ENCODE measurements at regions of chr7 and their contacts with region 1.

Region 1: GRCh38 chr7:134613623-134614347 is 32.9 kb upstream of the BPGM start:
- DNase-seq: peak; percentile 99
- H3K4me3 ChIP-seq: no peak overlapping the region
- H3K27ac ChIP-seq: peak overlapping the region; percentile 84
- H3K4me1 ChIP-seq: peaks cover 33% of the 10 kb centered on the region
- H3K27me3 ChIP-seq: no peaks in the 10 kb centered on the region
- CTCF ChIP-seq: peak in 1 of 2 donors; percentile 24

Region 2: GRCh38 chr7:134432296-134433152 is 181.3 kb before region 1 on chr7:
- CTCF ChIA-PET with region 1: no interaction called
- dilution Hi-C with region 1: loop called (anchors 25 kb)
- in situ Hi-C with region 1: loop called in 1 of 2 experiments (anchors 10 kb)
- intact Hi-C with region 1: no loop called
- DNase-seq: peak; percentile 91
- H3K4me3 ChIP-seq: peak overlapping the region; percentile 35 to 45 (median 45)
- H3K27ac ChIP-seq: peak overlapping the region; percentile 68
- H3K4me1 ChIP-seq: peaks cover 22% of the 10 kb centered on the region
- H3K27me3 ChIP-seq: no peaks in the 10 kb centered on the region
- CTCF ChIP-seq: peak; percentile 54 to 62

Region 3: DNA sequence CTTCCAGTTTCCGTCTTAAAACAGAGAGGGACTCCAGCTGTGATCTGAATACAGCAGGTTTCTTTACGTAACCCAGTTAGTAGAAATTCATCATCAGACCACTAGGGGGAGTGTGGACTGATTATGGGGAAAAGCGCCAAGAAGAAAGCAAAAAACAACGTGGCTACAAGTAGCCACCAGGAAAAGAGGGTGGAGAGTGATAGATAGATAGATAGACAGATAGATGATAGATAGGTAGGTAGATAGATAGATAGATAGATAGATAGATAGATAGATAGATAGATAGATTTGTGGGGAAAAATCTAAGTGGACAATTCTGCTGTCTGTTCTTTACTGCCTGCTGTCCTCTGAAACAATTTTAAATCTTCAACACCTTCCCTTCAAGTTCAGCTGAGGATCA is 99.1 kb before region 1 on chr7:
- CTCF ChIA-PET with region 1: no interaction called
- dilution Hi-C with region 1: no loop called
- in situ Hi-C with region 1: loop called in 1 of 2 experiments (anchors 5 kb)
- intact Hi-C with region 1: no loop called
- DNase-seq: peak; percentile 75
- H3K4me3 ChIP-seq: no peak overlapping the region
- H3K27ac ChIP-seq: no peak overlapping the region
- H3K4me1 ChIP-seq: peaks cover 52% of the 10 kb centered on the region
- H3K27me3 ChIP-seq: no peaks in the 10 kb centered on the region
- CTCF ChIP-seq: peak; percentile 73 to 78

Region 4: DNA sequence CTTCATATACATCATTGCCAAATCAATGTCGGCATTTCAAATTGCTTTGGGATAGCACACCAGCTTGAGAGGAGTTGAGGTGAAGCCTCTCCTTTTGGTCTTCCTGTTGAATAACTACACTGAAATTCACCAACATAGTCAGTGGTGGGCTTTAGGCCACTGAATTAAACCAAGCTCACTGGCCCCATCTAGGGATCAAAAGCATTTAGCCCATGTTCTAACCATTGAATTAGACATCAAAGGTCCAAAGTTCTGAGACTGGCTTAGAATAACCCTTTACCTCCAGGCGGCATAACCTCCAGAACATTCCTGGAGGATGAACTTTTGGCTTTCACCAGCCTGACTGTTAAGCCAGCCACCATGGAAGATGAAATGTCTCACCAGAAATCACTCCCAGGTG is 87.5 kb after region 1 on chr7:
- CTCF ChIA-PET with region 1: no interaction called
- dilution Hi-C with region 1: no loop called
- in situ Hi-C with region 1: no loop called
- intact Hi-C with region 1: loop called (anchors 1 kb)
- DNase-seq: no peak
- H3K4me3 ChIP-seq: no peak overlapping the region
- H3K27ac ChIP-seq: no peak overlapping the region
- H3K4me1 ChIP-seq: peaks cover 6% of the 10 kb centered on the region
- H3K27me3 ChIP-seq: no peaks in the 10 kb centered on the region
- CTCF ChIP-seq: peak; percentile 41 to 42

Region 5: DNA sequence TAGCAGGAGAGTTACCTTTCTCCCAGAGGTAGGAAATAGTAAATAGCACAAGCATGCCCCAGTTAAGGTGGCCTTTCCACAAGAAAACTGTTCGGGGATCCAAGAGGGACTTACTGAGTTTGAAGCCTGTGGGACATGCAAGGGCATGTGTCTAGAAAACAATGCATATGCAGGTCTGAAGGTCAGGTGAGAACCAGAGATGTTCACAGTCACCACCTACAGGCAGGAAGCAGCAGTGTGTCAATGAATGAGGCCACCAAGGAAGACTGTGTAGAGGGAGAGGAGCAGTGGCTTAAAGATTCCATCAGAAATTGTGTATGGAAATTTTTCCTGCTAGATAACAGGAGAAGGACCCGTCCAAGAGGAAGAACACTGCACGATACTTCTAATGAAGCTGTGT is 231.7 kb after region 1 on chr7:
- CTCF ChIA-PET with region 1: no interaction called
- dilution Hi-C with region 1: no loop called
- in situ Hi-C with region 1: no loop called
- intact Hi-C with region 1: loop called (anchors 5 kb)
- DNase-seq: peak; percentile 73
- H3K4me3 ChIP-seq: no peak overlapping the region
- H3K27ac ChIP-seq: peak overlapping the region; percentile 59
- H3K4me1 ChIP-seq: peaks cover 26% of the 10 kb centered on the region
- H3K27me3 ChIP-seq: no peaks in the 10 kb centered on the region
- CTCF ChIP-seq: peak; percentile 81 to 84

Region 6: DNA sequence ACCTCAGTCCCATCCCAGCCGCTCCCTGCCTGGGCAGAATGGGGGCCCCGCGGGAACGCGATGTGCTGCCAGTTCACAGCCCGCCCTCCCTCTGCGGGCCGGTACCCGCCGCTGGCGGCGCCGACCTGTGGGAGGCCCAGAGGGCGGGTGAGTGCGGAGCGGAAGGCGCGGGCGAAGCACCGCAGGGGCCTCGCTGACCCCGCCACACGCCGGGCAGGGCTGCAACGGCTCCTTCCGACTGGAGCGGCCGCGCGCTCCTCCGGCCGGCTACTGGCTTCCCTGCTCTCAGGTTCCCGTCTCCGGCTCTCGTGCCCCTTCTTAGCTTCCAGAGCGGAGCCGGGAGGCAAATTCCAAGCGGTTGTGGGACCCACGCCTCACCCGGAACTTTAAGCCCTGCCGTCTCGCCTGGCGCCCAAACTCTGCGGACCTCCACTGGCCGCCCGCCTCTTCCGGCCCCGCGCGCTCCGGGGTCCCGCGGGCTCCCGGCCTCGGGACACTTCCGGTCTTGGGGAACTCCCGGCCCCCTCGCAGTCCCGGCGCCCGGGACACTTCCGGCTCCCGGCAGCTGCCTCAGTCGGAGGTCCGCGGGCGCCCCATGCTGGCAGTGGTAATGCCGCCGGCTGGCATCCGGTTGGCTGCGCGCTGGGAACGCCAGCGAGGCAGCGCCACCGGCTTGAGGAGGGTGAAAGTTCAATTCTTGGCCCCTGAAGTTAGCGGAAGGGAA is 556.7 kb after region 1 on chr7 and contains the start of gene CYREN:
- CTCF ChIA-PET with region 1: no interaction called
- dilution Hi-C with region 1: no loop called
- in situ Hi-C with region 1: no loop called
- intact Hi-C with region 1: loop called (anchors 5 kb)
- DNase-seq: peak; percentile 94
- H3K4me3 ChIP-seq: peak within 1 kb of the TSS; percentile 52 to 83 (median 79)
- H3K27ac ChIP-seq: peak within 1 kb of the TSS; percentile 91
- H3K4me1 ChIP-seq: peaks cover 31% of the 10 kb centered on the region
- H3K27me3 ChIP-seq: no peaks in the 10 kb centered on the region
- CTCF ChIP-seq: peak; percentile 26 to 75
- total RNA-seq, gene CYREN: 45.2 to 55.8 TPM

Measured in mammary epithelial cell (primary cell).